Spleen (tissue), 13 donors: ENCODE measurements at regions of chr22 and their contacts with region 1.

Region 1: GRCh38 chr22:36194971-36195370 is 6.6 kb downstream of the APOL4 start:
- DNase-seq: peak; percentile 74
- H3K4me3 ChIP-seq: no peak overlapping the region
- H3K27ac ChIP-seq: no peak overlapping the region
- H3K4me1 ChIP-seq: peaks cover 5 to 36% (median 24%) of the 10 kb centered on the region in 6 donors
- H3K27me3 ChIP-seq: no peaks in the 10 kb centered on the region
- CTCF ChIP-seq: peak; percentile 33 to 80 (median 70)
- POLR2A ChIP-seq: no peak

Region 2: GRCh38 chr22:36277482-36278291 is 82.7 kb after region 1 on chr22:
- intact Hi-C with region 1: loop called (anchors 10 kb)
- DNase-seq: peak; percentile 85
- H3K4me3 ChIP-seq: no peak overlapping the region
- H3K27ac ChIP-seq: peak overlapping the region in 5 of 8 donors; percentile 0 to 55 (median 9)
- H3K4me1 ChIP-seq: peaks cover 9 to 47% (median 22%) of the 10 kb centered on the region in 6 donors
- H3K27me3 ChIP-seq: no peaks in the 10 kb centered on the region
- CTCF ChIP-seq: peak; percentile 30 to 89 (median 71)
- POLR2A ChIP-seq: no peak